HCT116 (cell line): ENCODE measurements at regions of chr7 and their contacts with region 1.

Region 1: GRCh38 chr7:42831718-42832431 is 80.0 kb downstream of the C7orf25 start:
- DNase-seq: peak; percentile 7
- ATAC-seq: peak; percentile 82
- H3K4me3 ChIP-seq: no peak overlapping the region
- H3K27ac ChIP-seq: no peak overlapping the region
- H3K4me1 ChIP-seq: no peaks in the 10 kb centered on the region
- H3K27me3 ChIP-seq: peaks cover 53% of the 10 kb centered on the region
- CTCF ChIP-seq: peak; percentile 33 to 47 (median 46); a peak in 5 of 6 replicates
- POLR2A ChIP-seq: no peak
- RAD21 ChIP-seq: peak; percentile 61

Region 2: GRCh38 chr7:42014625-42015546 is 817.0 kb before region 1 on chr7:
- CTCF ChIA-PET with region 1: no interaction called
- POLR2A ChIA-PET with region 1: no interaction called
- RAD21 ChIA-PET with region 1: no interaction called
- intact Hi-C with region 1: loop called (anchors 10 kb)
- DNase-seq: peak; percentile 44
- ATAC-seq: peak; percentile 62; the same call in 1 of the 2 replicates
- H3K4me3 ChIP-seq: no peak overlapping the region
- H3K27ac ChIP-seq: no peak overlapping the region
- H3K4me1 ChIP-seq: no peaks in the 10 kb centered on the region
- H3K27me3 ChIP-seq: peaks cover 13% of the 10 kb centered on the region; the same call in 1 of the 2 replicates
- CTCF ChIP-seq: peak; percentile 37 to 88 (median 73); a peak in 5 of 6 replicates
- POLR2A ChIP-seq: no peak
- RAD21 ChIP-seq: peak; percentile 59

Region 3: DNA sequence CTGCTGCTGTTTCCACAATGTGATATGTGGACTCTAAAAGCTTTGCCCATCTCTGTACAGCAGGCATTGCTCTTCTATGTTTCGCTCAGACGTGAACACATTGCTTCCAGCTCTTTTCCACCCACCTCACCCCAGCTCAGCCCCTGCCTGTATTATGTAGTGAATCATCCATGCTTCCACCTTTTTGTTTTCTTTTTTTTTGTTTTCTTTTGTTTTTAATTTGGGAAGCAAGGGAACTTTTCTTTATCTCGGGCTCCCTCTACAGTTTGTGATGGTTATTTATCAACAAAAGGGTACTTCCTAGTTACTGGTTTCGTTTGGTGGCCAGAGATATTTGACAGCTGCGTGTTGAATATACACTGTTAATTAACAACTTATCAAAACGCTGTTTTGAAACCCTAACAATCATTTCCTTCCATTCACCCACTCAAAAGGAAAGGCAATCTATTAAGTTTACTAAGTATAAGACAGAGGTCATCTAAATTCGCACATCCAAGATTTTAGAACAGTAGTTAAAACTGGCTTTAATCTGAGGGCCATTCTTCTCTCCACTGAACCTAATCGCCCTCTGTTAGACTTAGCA is 623.2 kb after region 1 on chr7:
- CTCF ChIA-PET with region 1: no interaction called
- POLR2A ChIA-PET with region 1: no interaction called
- RAD21 ChIA-PET with region 1: no interaction called
- intact Hi-C with region 1: no loop called
- DNase-seq: peak; percentile 19
- ATAC-seq: peak; percentile 81
- H3K4me3 ChIP-seq: no peak overlapping the region
- H3K27ac ChIP-seq: no peak overlapping the region
- H3K4me1 ChIP-seq: peaks cover 0 to 5% of the 10 kb centered on the region in 2 experiments; a peak in 2 of 4 replicates
- H3K27me3 ChIP-seq: no peaks in the 10 kb centered on the region
- CTCF ChIP-seq: peak; percentile 49 to 71 (median 68); a peak in 5 of 6 replicates
- POLR2A ChIP-seq: no peak
- RAD21 ChIP-seq: peak; percentile 73